HEK293 (cell line): ENCODE measurements at regions of chr6 and their contacts with region 1.

Region 1: DNA sequence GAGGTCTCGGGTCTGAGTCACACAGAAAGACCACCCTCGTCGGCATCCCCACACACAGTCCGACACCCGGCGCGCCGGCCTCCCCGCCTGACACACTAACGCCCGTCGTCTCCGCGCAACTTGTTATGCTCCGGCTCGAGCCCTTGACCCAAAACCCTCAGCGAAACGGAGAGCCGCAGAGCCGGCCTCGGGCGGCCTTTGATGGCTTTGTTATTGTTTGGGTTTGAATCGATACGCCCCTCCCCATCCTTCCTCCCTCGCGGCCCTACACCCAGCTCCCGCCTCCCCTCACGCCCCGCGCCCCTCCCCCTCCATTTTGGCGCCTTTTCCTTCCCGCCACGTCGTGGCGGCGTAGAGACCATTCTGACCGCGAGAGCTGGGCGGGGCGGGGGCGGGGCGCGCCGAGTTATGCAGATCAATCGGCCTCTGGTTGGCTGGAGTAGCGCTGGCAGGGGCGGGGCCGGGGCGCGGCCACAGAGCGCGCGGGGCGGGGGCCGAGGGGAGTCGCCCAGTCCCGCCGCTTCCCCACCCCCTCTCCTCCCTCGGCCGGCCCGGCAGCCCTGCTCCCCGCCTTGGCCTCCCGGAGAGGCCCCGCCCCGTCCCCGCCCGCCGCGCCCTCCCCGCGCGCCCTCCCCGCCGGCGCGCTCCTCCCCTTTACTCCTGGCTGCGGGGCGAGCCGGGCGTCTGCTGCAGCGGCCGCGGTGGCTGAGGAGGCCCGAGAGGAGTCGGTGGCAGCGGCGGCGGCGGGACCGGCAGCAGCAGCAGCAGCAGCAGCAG is at the start of gene PIM1:
- H3K4me3 ChIP-seq: peak within 1 kb of the TSS; percentile 97
- H3K27ac ChIP-seq: peak within 1 kb of the TSS; percentile 94
- H3K4me1 ChIP-seq: peaks cover 3% of the 10 kb centered on the region
- CTCF ChIP-seq: no peak

Region 2: DNA sequence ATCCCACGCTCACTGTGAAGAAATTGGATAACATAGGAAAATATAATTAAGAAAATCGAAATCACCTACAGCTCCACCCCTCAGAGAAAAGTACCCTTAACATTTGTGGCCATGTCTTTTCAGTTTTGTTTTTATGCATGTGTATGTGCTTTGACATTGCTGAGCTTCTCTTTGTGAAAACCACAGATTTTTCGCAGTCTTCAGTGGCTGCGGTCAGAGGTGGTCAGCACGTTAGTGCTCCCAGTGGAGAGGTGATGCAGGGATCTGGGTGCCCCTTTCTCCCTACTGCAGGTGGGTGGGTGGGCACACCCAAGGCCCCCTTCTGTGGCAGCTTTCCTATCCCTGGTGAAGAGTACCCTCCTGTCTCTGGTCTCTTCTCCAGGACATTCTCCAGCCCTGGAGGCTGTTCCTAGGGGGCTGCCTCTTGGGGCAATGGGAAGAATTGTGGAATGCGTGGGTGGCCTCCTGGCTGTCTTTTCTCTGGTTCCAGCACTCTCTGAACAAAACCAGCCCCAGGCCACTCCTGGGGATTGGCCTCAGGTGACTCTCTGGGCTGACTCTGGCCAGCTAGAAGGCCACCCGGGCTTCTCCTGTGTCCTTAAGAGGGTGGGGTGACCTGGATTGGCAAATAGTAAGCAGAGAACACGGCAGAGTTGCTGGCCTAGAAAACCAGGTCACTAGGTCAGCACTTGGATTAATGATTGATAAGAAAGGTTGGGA is 1767.4 kb before region 1 on chr6:
- CTCF ChIA-PET with region 1: no interaction called
- POLR2A ChIA-PET with region 1: no interaction called
- H3K4me3 ChIP-seq: no peak overlapping the region
- H3K27ac ChIP-seq: no peak overlapping the region
- H3K4me1 ChIP-seq: no peaks in the 10 kb centered on the region
- CTCF ChIP-seq: no peak

Region 3: DNA sequence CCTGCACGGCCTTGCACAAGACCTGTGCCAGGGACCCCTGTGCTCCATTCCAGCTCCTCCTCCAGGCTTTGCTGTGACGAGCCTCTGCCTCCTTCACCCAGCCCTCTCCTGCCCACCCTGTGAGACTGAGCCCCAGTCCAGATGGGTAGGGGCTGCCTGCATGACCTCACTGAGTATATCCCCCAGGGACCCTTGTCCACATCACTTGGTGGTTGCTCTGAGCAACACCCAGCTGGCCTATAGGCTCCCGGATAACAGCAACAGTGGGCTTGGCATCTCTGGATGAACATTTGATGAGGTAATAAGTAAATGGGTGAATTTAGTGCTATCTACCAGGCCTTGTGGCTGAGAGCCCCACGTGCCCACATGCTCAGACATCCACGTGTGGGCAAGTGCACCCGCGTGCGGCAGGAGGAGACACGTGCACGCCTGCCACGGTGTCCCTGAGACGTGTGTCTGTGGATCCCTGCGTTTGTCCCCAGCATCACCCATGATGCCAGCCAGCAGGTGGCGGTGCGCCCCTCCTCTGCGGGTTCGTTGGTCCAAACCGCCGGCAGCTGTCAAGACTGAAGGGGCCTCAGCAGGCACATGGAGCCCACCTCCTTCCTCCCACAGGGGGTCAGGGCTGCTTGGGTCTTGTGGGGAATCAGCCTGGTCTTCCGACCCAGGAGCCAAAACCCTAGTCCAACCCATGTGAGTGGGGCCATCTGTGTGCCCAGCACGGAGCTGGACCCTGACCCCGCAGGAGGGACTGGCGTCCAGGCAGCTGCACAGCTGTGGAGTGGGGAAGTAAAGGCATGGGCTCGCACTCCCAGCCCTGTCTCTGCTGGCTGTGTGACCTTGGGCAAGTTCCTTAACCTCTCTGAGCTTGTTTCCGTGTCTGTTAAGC is 118.3 kb before region 1 on chr6:
- CTCF ChIA-PET with region 1: interaction called, 221 read pairs
- POLR2A ChIA-PET with region 1: interaction called, 51 read pairs
- H3K4me3 ChIP-seq: no peak overlapping the region
- H3K27ac ChIP-seq: no peak overlapping the region
- H3K4me1 ChIP-seq: no peaks in the 10 kb centered on the region
- CTCF ChIP-seq: peak; percentile 97

Region 4: DNA sequence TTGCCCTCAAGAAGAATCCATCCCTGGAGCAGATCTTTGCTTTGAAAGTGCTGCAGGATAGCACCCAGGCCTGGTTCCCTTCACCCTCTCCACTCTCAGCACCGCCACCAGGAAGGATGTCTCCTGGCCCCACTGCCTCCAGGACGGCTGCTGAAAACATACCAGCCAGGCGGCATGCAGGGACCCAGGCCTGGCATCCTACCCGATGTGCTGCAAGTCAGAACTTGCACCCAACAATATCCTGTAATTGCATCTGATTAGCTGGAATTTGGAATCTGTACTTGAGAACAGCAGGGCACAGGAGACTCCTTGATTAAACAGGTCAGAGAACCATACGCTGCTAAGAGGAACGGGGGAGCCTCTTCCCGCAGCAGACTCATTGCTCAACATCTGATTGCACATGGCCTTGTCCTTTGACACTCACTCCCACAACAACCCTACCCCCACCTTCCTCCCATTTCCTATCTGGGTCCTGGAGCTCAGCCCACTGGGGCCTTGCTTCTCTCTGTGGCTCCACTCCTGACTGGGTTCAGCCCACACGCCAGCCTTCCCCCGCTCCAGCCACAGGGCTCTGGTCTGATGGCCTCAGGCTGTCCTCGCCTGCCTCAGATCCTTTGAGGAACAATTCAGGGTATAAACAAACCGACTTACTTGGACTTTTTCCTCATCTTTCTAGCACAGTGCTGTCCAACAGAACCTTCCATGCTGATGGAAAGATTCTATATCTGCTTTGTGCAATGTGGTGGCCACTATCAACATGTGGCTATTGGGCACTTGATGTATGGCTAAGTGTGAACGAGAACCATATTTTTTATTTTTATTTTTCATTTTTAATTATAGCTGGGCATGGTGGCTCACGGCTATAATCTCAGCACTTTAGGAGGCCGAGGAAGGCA is 86.2 kb before region 1 on chr6:
- CTCF ChIA-PET with region 1: interaction called, 3 read pairs
- POLR2A ChIA-PET with region 1: interaction called, 18 read pairs
- H3K4me3 ChIP-seq: no peak overlapping the region
- H3K27ac ChIP-seq: no peak overlapping the region
- H3K4me1 ChIP-seq: no peaks in the 10 kb centered on the region
- CTCF ChIP-seq: no peak

Region 5: DNA sequence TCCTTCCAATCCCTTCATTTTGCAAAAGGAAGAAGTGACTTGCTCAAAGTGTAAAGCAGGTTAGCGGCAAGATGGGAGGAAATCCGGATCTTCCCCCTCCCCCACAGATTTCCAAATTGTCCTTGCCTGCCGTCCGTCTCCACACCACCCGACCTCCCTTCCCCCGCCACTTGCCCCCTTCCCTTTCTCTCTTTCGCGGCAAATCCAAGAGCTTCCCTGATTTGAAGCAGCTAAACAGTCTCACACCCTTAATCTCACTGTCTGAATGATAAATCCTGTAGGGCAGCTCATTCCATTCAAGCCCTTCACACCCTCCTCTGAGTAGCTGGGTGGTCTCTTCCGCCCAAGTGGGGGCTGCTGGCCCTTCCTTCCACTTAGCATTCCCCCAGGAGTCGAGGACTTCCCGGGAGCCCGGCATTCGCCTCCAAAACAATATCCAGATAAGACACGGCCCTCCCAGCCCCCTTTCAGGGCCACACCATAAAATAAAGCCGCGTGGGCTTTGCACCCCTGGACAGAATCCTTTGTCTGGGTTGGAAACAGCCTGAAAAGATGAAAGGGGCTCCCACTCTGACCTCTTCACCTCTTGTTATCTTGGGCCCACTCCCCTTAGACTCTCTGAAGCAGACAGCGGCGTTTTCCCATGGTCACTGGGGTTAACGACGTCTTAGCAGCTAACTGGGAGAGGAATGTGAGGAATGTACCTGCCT is 43.7 kb before region 1 on chr6:
- CTCF ChIA-PET with region 1: interaction called, 11 read pairs
- POLR2A ChIA-PET with region 1: interaction called, 31 read pairs
- H3K4me3 ChIP-seq: peak overlapping the region; percentile 3; the same call in 1 of the 2 replicates
- H3K27ac ChIP-seq: peak overlapping the region; percentile 10; the same call in 1 of the 2 replicates
- H3K4me1 ChIP-seq: peaks cover 14% of the 10 kb centered on the region
- CTCF ChIP-seq: no peak

Region 6: DNA sequence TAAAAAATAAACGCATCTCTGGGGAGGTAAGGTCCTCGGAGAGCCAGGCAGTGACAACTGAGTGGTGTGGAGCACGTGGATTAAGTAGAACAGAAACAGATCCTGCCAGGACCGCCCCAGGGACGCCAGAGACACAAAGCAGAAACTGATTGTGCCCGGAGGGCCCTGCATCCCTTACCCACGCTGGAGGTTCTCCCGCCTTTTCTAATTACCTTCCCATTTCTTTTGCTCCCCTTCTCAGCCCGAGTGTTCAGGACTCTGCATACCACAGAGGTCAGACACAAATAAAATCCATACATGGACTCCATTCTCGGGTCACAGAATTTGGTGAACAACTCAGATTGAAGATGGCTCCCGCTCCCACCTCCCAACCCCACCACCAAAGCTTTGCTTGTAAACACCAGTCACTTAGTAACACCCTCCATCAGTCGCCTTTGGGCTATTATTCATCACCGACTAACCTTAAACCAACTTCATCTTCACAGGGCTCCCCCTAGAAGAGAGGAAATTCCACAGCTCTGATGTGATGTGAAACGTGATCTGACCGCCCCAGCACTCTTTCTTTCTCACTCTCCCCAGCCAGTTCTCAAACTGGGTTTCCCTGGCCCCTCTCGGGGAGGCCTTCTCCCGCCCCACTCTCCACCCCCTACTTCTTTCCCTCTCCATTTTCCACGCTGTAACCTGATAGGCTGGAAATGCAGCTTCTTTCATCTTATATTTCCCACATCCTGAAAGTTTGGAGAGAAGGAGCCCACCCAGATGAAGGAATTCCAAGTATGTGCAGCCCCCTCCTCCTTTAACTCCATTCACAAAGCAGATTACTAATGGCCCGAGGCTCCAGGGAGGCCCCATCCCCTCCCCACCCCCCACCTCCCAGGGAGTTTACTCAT is 32.2 kb before region 1 on chr6:
- CTCF ChIA-PET with region 1: interaction called, 32 read pairs
- POLR2A ChIA-PET with region 1: interaction called, 82 read pairs
- H3K4me3 ChIP-seq: peak overlapping the region; percentile 19
- H3K27ac ChIP-seq: peak overlapping the region; percentile 73
- H3K4me1 ChIP-seq: peaks cover 27% of the 10 kb centered on the region
- CTCF ChIP-seq: no peak

Region 7: GRCh38 chr6:37251211-37251780 is 81.6 kb after region 1 on chr6:
- CTCF ChIA-PET with region 1: no interaction called
- POLR2A ChIA-PET with region 1: no interaction called
- H3K4me3 ChIP-seq: no peak overlapping the region
- H3K27ac ChIP-seq: no peak overlapping the region
- H3K4me1 ChIP-seq: no peaks in the 10 kb centered on the region
- CTCF ChIP-seq: no peak